ENCODE measurements at regions of chr1 and their contacts with region 1.

Region 1: DNA sequence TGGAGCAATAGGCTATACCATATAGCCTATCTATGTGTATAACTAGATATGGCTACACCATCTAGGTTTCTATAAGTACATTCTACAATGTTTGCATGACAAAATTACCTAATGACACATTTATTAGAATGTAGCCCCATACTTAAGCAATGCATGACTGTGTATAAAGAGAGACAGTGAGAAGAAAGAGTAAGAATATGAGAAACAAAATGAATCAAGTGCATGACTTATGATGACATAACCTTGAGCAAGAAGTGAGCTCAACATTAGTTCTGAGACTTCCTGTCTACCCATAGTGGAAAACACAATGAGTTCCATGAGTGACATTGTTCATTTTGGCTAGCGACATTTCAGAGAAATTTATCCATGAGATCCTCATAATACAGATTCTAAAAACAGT is 10.1 kb downstream of the SLC44A5 start:
- DNase-seq: no peak
- ATAC-seq: no peak
- H3K4me3 ChIP-seq: no peak overlapping the region
- H3K27ac ChIP-seq: no peak overlapping the region
- H3K4me1 ChIP-seq: no peaks in the 10 kb centered on the region
- H3K27me3 ChIP-seq: no peaks in the 10 kb centered on the region
- CTCF ChIP-seq: no peak

Region 2: GRCh38 chr1:75582725-75583261 is 18.0 kb before region 1 on chr1:
- CTCF ChIA-PET with region 1: no interaction called
- POLR2A ChIA-PET with region 1: no interaction called
- in situ Hi-C with region 1: no loop called
- intact Hi-C with region 1: loop called (anchors 2 kb)
- DNase-seq: no peak
- ATAC-seq: no peak
- H3K4me3 ChIP-seq: no peak overlapping the region
- H3K27ac ChIP-seq: no peak overlapping the region
- H3K4me1 ChIP-seq: no peaks in the 10 kb centered on the region
- H3K27me3 ChIP-seq: no peaks in the 10 kb centered on the region
- CTCF ChIP-seq: no peak

Measured in Panc1 (cell line).